Psoas muscle (tissue), 8 donors: ENCODE measurements at regions of chr3 and their contacts with region 1.

Region 1: DNA sequence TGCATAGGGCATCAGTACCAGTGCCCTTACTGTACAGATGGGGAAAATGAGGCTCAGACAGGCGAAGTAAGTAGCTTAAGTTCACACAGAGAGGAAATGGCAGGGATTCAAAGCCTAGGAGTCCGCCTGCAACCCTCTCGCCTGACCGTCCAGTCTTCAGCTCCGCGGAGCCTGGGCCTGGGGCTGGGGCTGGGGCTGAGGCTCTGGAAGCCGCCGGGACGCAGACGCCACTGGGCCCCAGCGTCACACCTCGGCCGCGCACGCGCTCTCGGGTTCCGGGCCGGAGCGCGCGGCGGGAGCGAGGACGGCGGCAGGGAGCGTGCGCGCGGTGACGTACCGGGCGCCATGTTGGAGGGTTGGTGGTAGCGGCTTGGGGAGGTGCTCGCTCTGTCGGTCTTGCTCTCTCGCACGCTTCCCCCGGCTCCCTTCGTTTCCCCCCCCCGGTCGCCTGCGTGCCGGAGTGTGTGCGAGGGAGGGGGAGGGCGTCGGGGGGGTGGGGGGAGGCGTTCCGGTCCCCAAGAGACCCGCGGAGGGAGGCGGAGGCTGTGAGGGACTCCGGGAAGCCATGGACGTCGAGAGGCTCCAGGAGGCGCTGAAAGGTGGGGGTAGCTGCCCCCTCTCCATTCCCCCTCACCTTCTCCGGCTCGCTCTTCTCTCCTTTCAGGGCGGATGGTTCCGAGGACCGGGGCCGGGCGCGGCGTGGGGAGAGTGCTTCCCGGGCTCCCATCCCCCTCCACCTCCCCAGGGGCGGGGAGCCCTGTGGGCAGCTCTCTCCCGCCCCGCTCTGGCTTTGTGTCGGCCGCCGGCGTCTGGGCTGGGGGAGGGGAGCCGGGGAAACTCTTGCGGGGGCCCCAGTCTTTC is at the start of gene PPP4R2:
- DNase-seq: peak; percentile 92 to 95
- ATAC-seq: peak; percentile 97 to 99 (median 98)
- H3K4me3 ChIP-seq: peak within 1 kb of the TSS; percentile 89
- H3K27ac ChIP-seq: peak within 1 kb of the TSS; percentile 98
- H3K4me1 ChIP-seq: peaks cover 32% of the 10 kb centered on the region
- H3K27me3 ChIP-seq: no peaks in the 10 kb centered on the region
- CTCF ChIP-seq: peak; percentile 3
- total RNA-seq, gene PPP4R2: 51.2 to 94.1 (median 62.1) TPM

Region 2: GRCh38 chr3:71805199-71805598 is 1191.5 kb before region 1 on chr3:
- intact Hi-C with region 1: no loop called
- DNase-seq: no peak
- ATAC-seq: no peak
- H3K4me3 ChIP-seq: no peak overlapping the region
- H3K27ac ChIP-seq: no peak overlapping the region
- H3K4me1 ChIP-seq: no peaks in the 10 kb centered on the region
- H3K27me3 ChIP-seq: peaks cover 1 to 7% (median 3%) of the 10 kb centered on the region in 3 donors
- CTCF ChIP-seq: no peak

Region 3: GRCh38 chr3:72847751-72848702 is 148.7 kb before region 1 on chr3 and contains the start of gene SHQ1:
- intact Hi-C with region 1: loop called in 1 of 2 experiments (anchors 10 kb)
- DNase-seq: peak; percentile 96 to 98
- ATAC-seq: peak; percentile 98 to 99 (median 99)
- H3K4me3 ChIP-seq: peak within 1 kb of the TSS; percentile 89
- H3K27ac ChIP-seq: peak within 1 kb of the TSS; percentile 84
- H3K4me1 ChIP-seq: peaks cover 31% of the 10 kb centered on the region
- H3K27me3 ChIP-seq: no peaks in the 10 kb centered on the region
- CTCF ChIP-seq: no peak
- total RNA-seq, gene SHQ1: 6.2 to 20.6 (median 18.3) TPM

Region 4: DNA sequence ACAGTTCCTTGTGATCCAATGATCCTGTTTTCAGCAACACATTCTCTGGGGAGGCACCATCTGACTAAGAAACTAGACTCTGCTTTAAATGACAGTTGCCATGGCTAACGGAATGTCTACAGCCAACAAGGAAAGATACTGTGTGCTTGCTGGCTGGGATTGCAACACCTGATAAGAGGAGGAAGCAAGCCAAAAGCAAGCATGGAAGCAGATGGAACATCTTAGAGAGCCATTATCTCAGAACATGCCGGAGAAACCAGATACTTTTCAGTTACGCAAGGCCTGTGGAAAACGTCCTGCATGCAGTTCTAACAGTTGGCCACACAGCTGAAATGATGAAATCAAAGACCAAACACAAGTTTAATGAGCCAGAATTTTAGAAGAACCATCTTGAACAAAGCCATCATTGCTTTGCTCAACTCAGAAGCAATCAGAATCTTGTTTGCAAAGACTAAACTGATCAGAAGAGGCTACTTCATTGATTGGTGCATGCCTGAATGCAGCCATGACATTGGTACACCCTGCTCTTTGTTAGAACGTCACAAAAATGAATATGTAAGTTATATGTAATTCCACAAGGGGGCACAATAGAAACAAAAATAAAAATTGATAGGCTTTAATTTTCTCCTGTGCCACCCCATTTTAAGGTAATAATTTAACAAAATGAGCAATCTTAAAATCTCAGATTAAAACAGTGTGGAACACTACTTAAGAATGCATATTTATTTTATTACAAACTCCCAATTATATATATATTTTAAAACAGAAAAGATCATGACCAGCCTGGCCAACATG is 58.0 kb before region 1 on chr3:
- intact Hi-C with region 1: loop called (anchors 5 kb)
- DNase-seq: peak; percentile 37 to 57
- ATAC-seq: peak; percentile 88 to 98 (median 94)
- H3K4me3 ChIP-seq: no peak overlapping the region
- H3K27ac ChIP-seq: no peak overlapping the region
- H3K4me1 ChIP-seq: peaks cover 5% of the 10 kb centered on the region
- H3K27me3 ChIP-seq: no peaks in the 10 kb centered on the region
- CTCF ChIP-seq: peak; percentile 61

Region 5: DNA sequence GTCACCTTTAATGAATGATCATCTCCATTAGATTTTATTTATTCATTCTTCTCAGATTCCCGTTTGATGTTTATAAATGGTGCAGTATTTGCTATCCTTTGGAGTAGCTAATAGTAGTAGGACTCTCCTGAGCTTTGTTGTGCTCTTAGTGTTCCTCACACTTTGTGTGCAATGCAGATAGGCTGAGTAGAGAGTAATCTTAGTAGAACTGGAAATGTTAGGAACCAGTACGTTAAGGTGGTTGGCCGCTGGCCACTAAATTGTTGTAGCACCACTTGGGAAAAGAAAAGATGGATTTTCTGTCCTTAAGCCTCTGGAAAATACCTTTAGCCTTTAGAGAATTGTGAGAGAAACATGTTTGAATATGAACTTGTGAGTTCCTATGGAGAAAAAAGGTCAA is 44.8 kb after region 1 on chr3:
- intact Hi-C with region 1: loop called (anchors 5 kb)
- DNase-seq: no peak
- ATAC-seq: no peak
- H3K4me3 ChIP-seq: no peak overlapping the region
- H3K27ac ChIP-seq: no peak overlapping the region
- H3K4me1 ChIP-seq: peaks cover 47% of the 10 kb centered on the region
- H3K27me3 ChIP-seq: no peaks in the 10 kb centered on the region
- CTCF ChIP-seq: no peak

Region 6: GRCh38 chr3:73056014-73056844 is 59.5 kb after region 1 on chr3:
- intact Hi-C with region 1: loop called (anchors 5 kb)
- DNase-seq: no peak
- ATAC-seq: peak in 3 of 4 donors; percentile 43 to 78 (median 62)
- H3K4me3 ChIP-seq: no peak overlapping the region
- H3K27ac ChIP-seq: no peak overlapping the region
- H3K4me1 ChIP-seq: peaks cover 6% of the 10 kb centered on the region
- H3K27me3 ChIP-seq: no peaks in the 10 kb centered on the region
- CTCF ChIP-seq: peak; percentile 52

Region 7: DNA sequence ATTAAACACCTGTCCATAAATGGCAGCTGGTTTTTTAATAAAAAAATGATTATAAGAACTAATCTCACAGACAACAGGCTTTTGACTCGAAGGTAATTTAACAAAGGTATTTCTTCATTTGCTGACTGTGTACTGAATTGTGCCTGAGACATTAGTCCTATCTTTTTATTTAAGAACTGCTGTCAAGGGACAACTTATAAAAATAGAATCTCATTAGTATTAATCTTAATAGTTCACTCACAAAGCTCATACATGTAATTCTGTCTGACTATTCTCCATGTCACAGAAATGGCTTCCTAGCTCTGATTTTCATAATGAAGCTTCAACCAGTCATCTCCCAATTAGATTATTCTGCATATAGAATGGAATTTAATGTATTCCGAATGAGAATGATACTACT is 905.0 kb after region 1 on chr3:
- intact Hi-C with region 1: no loop called
- DNase-seq: no peak
- ATAC-seq: no peak
- H3K4me3 ChIP-seq: no peak overlapping the region
- H3K27ac ChIP-seq: no peak overlapping the region
- H3K4me1 ChIP-seq: no peaks in the 10 kb centered on the region
- H3K27me3 ChIP-seq: no peaks in the 10 kb centered on the region
- CTCF ChIP-seq: no peak